ENCODE measurements at regions of chr2 and their contacts with region 1.

Region 1: DNA sequence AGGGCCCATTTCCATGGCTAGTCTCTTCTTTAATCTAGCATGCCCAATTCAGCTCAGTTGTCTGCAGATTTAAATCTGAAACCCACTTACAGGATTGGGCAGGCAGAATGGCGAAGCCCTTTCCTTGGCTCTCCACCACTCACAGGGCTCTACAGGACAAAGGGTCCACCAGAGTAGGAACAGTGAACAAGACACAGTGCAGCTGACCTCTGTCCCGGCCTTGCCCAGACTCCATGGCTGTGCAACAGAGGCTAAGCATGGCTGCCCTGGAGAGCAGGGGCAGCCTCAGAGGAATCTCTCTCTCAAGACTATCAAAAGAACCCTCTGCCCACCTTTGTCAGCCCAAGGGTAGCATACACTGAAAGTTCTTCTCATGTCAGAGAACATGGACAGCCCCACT is 9.7 kb upstream of the ATP6V1B1 start:
- DNase-seq: no peak
- H3K4me3 ChIP-seq: no peak overlapping the region
- H3K4me3 Mint-ChIP-seq: no peak overlapping the region
- H3K27ac ChIP-seq: no peak overlapping the region
- H3K27ac Mint-ChIP-seq: no peak overlapping the region
- H3K4me1 ChIP-seq: no peaks in the 10 kb centered on the region
- H3K4me1 Mint-ChIP-seq: peaks cover 3% of the 10 kb centered on the region
- H3K27me3 ChIP-seq: peaks cover 0 to 2% of the 10 kb centered on the region in 2 donors
- H3K27me3 Mint-ChIP-seq: peaks cover 15 to 25% (median 19%) of the 10 kb centered on the region in 3 donors
- CTCF ChIP-seq: no peak

Region 2: GRCh38 chr2:70779911-70780545 is 146.0 kb before region 1 on chr2:
- intact Hi-C with region 1: loop called (anchors 5 kb)
- DNase-seq: no peak
- H3K4me3 ChIP-seq: no peak overlapping the region
- H3K4me3 Mint-ChIP-seq: no peak overlapping the region
- H3K27ac ChIP-seq: no peak overlapping the region
- H3K27ac Mint-ChIP-seq: no peak overlapping the region
- H3K4me1 ChIP-seq: peaks cover 8 to 10% of the 10 kb centered on the region in 2 donors
- H3K4me1 Mint-ChIP-seq: peaks cover 10% of the 10 kb centered on the region
- H3K27me3 ChIP-seq: peaks cover 3 to 12% of the 10 kb centered on the region in 2 donors
- H3K27me3 Mint-ChIP-seq: peaks cover 4 to 12% (median 11%) of the 10 kb centered on the region in 3 donors
- CTCF ChIP-seq: no peak